Caco-2 (cell line): ENCODE measurements at regions of chr9 and their contacts with region 1.

Region 1: DNA sequence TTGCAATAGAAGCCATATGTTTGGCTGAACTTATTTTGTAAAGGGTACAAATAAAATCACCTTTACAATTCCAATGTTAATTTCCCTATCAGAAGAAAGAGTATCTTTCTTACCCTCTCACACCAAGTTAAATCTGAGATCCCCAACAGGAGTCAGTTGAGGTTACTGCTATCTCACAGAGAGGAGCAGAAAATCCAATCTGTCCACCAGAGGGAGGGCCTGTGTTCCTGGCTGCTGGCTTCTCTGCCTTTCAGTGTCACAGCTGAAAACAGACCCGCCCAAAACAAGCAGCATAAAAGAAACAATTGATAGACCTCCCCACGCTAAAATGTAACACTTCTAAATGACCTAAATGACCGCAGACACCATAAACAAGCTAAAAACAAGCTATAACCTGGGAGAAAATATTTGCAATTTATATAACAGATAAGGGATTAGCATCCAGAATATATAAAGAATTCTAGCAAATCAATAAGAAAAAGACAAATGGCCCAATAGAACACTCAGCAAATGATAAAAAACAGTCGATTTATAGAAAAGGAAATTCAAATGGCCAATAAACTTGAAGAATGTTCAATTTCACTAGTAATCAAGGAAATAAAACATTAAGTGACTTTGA is 24.5 kb upstream of the MVB12B start:
- DNase-seq: peak; percentile 75 to 81
- H3K4me3 ChIP-seq: no peak overlapping the region
- H3K4me3 Mint-ChIP-seq: no peak overlapping the region
- H3K27ac Mint-ChIP-seq: no peak overlapping the region
- H3K4me1 ChIP-seq: no peaks in the 10 kb centered on the region
- H3K4me1 Mint-ChIP-seq: peaks cover 7% of the 10 kb centered on the region
- H3K27me3 ChIP-seq: no peaks in the 10 kb centered on the region
- H3K27me3 Mint-ChIP-seq: no peaks in the 10 kb centered on the region
- CTCF ChIP-seq: peak; percentile 83 to 87

Region 2: GRCh38 chr9:126334721-126335621 is 32.9 kb after region 1 on chr9:
- CTCF ChIA-PET with region 1: interaction called, 3 read pairs
- POLR2A ChIA-PET with region 1: no interaction called
- intact Hi-C with region 1: loop called (anchors 1 kb)
- DNase-seq: peak; percentile 84 to 87
- H3K4me3 ChIP-seq: peak overlapping the region; percentile 21
- H3K4me3 Mint-ChIP-seq: peak overlapping the region; percentile 62
- H3K27ac Mint-ChIP-seq: peak overlapping the region; percentile 86
- H3K4me1 ChIP-seq: peaks cover 43% of the 10 kb centered on the region
- H3K4me1 Mint-ChIP-seq: peaks cover 24% of the 10 kb centered on the region
- H3K27me3 ChIP-seq: no peaks in the 10 kb centered on the region
- H3K27me3 Mint-ChIP-seq: no peaks in the 10 kb centered on the region
- CTCF ChIP-seq: no peak

Region 3: GRCh38 chr9:126365780-126366179 is 63.7 kb after region 1 on chr9:
- CTCF ChIA-PET with region 1: no interaction called
- POLR2A ChIA-PET with region 1: no interaction called
- intact Hi-C with region 1: loop called (anchors 1 kb)
- DNase-seq: no peak
- H3K4me3 ChIP-seq: no peak overlapping the region
- H3K4me3 Mint-ChIP-seq: no peak overlapping the region
- H3K27ac Mint-ChIP-seq: peak overlapping the region; percentile 1
- H3K4me1 ChIP-seq: peaks cover 17% of the 10 kb centered on the region
- H3K4me1 Mint-ChIP-seq: peaks cover 22% of the 10 kb centered on the region
- H3K27me3 ChIP-seq: no peaks in the 10 kb centered on the region
- H3K27me3 Mint-ChIP-seq: no peaks in the 10 kb centered on the region
- CTCF ChIP-seq: peak in 1 of 2 experiments; percentile 3

Region 4: GRCh38 chr9:126386088-126386487 is 84.0 kb after region 1 on chr9:
- CTCF ChIA-PET with region 1: no interaction called
- POLR2A ChIA-PET with region 1: no interaction called
- intact Hi-C with region 1: loop called (anchors 1 kb)
- DNase-seq: peak in 1 of 2 experiments; percentile 51
- H3K4me3 ChIP-seq: no peak overlapping the region
- H3K4me3 Mint-ChIP-seq: no peak overlapping the region
- H3K27ac Mint-ChIP-seq: no peak overlapping the region
- H3K4me1 ChIP-seq: no peaks in the 10 kb centered on the region
- H3K4me1 Mint-ChIP-seq: no peaks in the 10 kb centered on the region
- H3K27me3 ChIP-seq: no peaks in the 10 kb centered on the region
- H3K27me3 Mint-ChIP-seq: no peaks in the 10 kb centered on the region
- CTCF ChIP-seq: peak; percentile 42 to 56

Region 5: GRCh38 chr9:126398403-126399058 is 96.4 kb after region 1 on chr9:
- CTCF ChIA-PET with region 1: interaction called, 9 read pairs
- POLR2A ChIA-PET with region 1: no interaction called
- intact Hi-C with region 1: loop called (anchors 1 kb)
- DNase-seq: peak in 1 of 2 experiments; percentile 84
- H3K4me3 ChIP-seq: no peak overlapping the region
- H3K4me3 Mint-ChIP-seq: no peak overlapping the region
- H3K27ac Mint-ChIP-seq: no peak overlapping the region
- H3K4me1 ChIP-seq: no peaks in the 10 kb centered on the region
- H3K4me1 Mint-ChIP-seq: no peaks in the 10 kb centered on the region
- H3K27me3 ChIP-seq: no peaks in the 10 kb centered on the region
- H3K27me3 Mint-ChIP-seq: no peaks in the 10 kb centered on the region
- CTCF ChIP-seq: peak; percentile 87 to 90